ENCODE measurements at regions of chr19 and their contacts with region 1.

Region 1: DNA sequence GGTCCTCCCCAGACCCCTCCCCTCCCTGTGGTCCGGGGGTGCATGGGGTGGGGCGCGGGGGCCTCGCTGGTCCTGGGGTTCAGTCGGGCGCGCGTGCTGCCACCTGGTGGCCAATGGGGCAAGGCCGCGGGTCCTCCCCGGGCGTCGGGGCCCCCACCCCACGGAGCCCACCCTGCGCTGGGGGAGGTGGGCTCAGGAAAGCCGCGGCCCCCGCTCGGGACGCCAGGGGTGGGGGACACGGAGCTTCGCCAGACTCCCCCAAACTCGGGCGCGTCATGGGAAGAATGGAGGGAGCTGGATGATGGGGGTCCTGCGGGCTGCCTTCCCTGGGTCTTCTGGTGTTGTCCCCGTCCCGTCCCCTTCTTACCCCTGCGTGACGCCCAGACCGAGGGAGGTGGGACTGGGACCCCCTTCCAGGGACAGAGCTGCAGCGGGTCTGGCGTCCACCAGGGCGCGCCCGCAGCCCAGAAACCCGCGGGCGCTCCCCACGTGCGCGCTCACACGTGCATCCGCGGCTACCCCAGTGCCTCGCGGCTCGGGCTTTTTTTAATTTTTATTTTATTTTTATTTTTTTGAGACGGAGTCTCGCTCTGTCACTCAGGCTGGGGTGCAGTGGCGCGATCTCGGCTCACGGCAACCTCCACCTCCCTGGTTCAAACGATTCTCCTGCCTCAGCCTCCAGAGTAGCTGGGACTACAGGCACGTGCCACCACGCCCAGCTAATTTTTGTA is 19.8 kb upstream of the TCF3 start:
- DNase-seq: peak; percentile 75
- ATAC-seq: peak; percentile 38
- H3K4me3 Mint-ChIP-seq: peak overlapping the region; percentile 71
- H3K27ac Mint-ChIP-seq: peak overlapping the region; percentile 53
- H3K4me1 Mint-ChIP-seq: peaks cover 33% of the 10 kb centered on the region
- H3K27me3 Mint-ChIP-seq: peaks cover 24% of the 10 kb centered on the region
- CTCF ChIP-seq: no peak

Region 2: GRCh38 chr19:377801-378581 is 1294.2 kb before region 1 on chr19:
- CTCF ChIA-PET with region 1: no interaction called
- POLR2A ChIA-PET with region 1: no interaction called
- intact Hi-C with region 1: no loop called
- DNase-seq: no peak
- ATAC-seq: no peak
- H3K4me3 Mint-ChIP-seq: no peak overlapping the region
- H3K27ac Mint-ChIP-seq: no peak overlapping the region
- H3K4me1 Mint-ChIP-seq: peaks cover 7% of the 10 kb centered on the region
- H3K27me3 Mint-ChIP-seq: peaks cover 7% of the 10 kb centered on the region
- CTCF ChIP-seq: no peak

Region 3: GRCh38 chr19:1364070-1364704 is 308.0 kb before region 1 on chr19:
- CTCF ChIA-PET with region 1: no interaction called
- POLR2A ChIA-PET with region 1: no interaction called
- intact Hi-C with region 1: no loop called
- DNase-seq: no peak
- ATAC-seq: peak; percentile 27
- H3K4me3 Mint-ChIP-seq: peak overlapping the region; percentile 44
- H3K27ac Mint-ChIP-seq: no peak overlapping the region
- H3K4me1 Mint-ChIP-seq: peaks cover 36% of the 10 kb centered on the region
- H3K27me3 Mint-ChIP-seq: no peaks in the 10 kb centered on the region
- CTCF ChIP-seq: no peak

Region 4: GRCh38 chr19:1592755-1593500 is 79.3 kb before region 1 on chr19 and contains the start of gene MBD3:
- CTCF ChIA-PET with region 1: interaction called, 8 read pairs
- POLR2A ChIA-PET with region 1: interaction called, 5 read pairs
- intact Hi-C with region 1: loop called (anchors 2 kb)
- DNase-seq: peak; percentile 89
- ATAC-seq: peak; percentile 84
- H3K4me3 Mint-ChIP-seq: peak within 1 kb of the TSS; percentile 90
- H3K27ac Mint-ChIP-seq: peak within 1 kb of the TSS; percentile 89
- H3K4me1 Mint-ChIP-seq: peaks cover 33% of the 10 kb centered on the region
- H3K27me3 Mint-ChIP-seq: no peaks in the 10 kb centered on the region
- CTCF ChIP-seq: no peak
- total RNA-seq, gene MBD3: 91.9 and 96.9 TPM in 2 replicates

Region 5: GRCh38 chr19:1618157-1619093 is 53.8 kb before region 1 on chr19:
- CTCF ChIA-PET with region 1: interaction called, 19 read pairs
- POLR2A ChIA-PET with region 1: interaction called, 3 read pairs
- intact Hi-C with region 1: loop called (anchors 1 kb)
- DNase-seq: no peak
- ATAC-seq: peak; percentile 72
- H3K4me3 Mint-ChIP-seq: no peak overlapping the region
- H3K27ac Mint-ChIP-seq: peak overlapping the region; percentile 70
- H3K4me1 Mint-ChIP-seq: peaks cover 33% of the 10 kb centered on the region
- H3K27me3 Mint-ChIP-seq: no peaks in the 10 kb centered on the region
- CTCF ChIP-seq: no peak

Region 6: DNA sequence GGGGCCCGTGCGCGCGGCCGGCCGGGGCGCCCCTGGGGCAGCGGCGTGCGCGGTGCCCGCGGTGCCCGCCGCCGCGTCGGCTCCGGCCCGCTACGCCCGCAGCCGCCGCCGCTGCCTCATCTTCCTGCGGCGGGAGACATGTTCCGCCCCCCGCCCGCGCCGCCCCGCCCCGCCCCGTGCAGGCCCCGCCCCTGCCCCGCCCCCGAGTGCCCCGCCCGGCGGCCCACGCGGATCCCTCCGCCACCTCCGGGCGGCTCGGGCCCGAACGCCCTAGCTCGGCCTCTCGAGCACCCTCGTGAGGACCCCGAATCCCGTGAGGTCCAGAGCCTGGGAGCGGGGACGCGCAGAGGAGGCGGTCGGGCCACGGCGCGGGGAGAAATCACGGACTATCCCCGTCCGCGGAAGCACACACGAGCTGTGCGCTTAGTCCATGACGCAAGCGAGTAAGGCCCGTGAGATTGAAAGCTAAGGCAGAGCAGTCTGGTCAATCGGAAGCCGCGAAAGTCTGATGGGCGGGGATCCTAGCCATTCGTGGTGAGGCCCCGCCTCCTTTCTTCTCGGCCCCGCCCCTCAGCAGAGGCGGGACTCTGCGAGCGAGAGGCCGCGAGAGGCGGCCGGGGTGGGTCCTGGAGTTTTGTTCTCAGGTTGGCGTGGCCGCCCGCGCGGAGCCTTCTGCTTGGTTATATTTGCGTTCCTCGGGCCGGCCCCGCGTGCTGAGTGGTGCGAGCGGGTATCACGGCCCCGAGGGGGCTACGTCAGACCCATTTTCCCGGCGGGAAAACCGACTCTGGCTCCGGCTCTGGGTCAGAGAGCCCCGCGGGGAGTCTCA is 19.5 kb before region 1 on chr19 and contains the start of gene TCF3:
- CTCF ChIA-PET with region 1: interaction called, 29 read pairs
- POLR2A ChIA-PET with region 1: interaction called, 121 read pairs
- intact Hi-C with region 1: loop called (anchors 1 kb)
- DNase-seq: peak; percentile 99
- ATAC-seq: peak; percentile 82
- H3K4me3 Mint-ChIP-seq: peak within 1 kb of the TSS; percentile 91
- H3K27ac Mint-ChIP-seq: peak within 1 kb of the TSS; percentile 95
- H3K4me1 Mint-ChIP-seq: peaks cover 68% of the 10 kb centered on the region
- H3K27me3 Mint-ChIP-seq: no peaks in the 10 kb centered on the region
- CTCF ChIP-seq: no peak
- total RNA-seq, gene TCF3: 139 and 143 TPM in 2 replicates

Region 7: DNA sequence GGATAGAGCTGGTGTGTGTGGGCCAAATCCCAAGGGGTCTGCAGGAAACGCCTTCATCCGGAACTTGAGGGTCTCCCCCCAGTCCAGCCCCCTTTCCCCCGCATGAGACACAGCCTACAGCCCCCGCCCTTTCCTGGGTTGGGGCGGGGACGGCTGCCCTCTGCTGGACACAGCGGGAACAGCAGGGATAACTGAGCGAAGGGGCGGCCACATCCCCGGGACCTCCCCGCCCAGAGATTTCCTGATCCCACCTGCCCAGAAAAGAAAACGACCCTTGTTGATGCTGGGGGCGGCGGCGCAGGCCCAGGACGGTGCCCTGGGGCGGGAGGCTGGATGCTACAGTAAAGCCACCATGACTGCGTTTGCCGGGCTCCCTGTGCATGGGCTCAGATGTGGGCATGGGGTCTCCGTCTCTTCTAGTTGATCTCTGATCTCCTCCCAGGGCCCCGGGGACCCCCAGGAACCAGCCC is 95.3 kb after region 1 on chr19:
- CTCF ChIA-PET with region 1: interaction called, 13 read pairs
- POLR2A ChIA-PET with region 1: no interaction called
- intact Hi-C with region 1: loop called (anchors 1 kb)
- DNase-seq: peak; percentile 74
- ATAC-seq: peak; percentile 84
- H3K4me3 Mint-ChIP-seq: no peak overlapping the region
- H3K27ac Mint-ChIP-seq: no peak overlapping the region
- H3K4me1 Mint-ChIP-seq: peaks cover 4% of the 10 kb centered on the region
- H3K27me3 Mint-ChIP-seq: peaks cover 57% of the 10 kb centered on the region
- CTCF ChIP-seq: no peak

Region 8: GRCh38 chr19:1812469-1813196 is 140.4 kb after region 1 on chr19:
- CTCF ChIA-PET with region 1: interaction called, 3 read pairs
- POLR2A ChIA-PET with region 1: no interaction called
- intact Hi-C with region 1: loop called (anchors 1 kb)
- DNase-seq: peak; percentile 82
- ATAC-seq: peak; percentile 81
- H3K4me3 Mint-ChIP-seq: peak overlapping the region; percentile 96
- H3K27ac Mint-ChIP-seq: peak overlapping the region; percentile 90
- H3K4me1 Mint-ChIP-seq: peaks cover 14% of the 10 kb centered on the region
- H3K27me3 Mint-ChIP-seq: no peaks in the 10 kb centered on the region
- CTCF ChIP-seq: no peak

Region 9: DNA sequence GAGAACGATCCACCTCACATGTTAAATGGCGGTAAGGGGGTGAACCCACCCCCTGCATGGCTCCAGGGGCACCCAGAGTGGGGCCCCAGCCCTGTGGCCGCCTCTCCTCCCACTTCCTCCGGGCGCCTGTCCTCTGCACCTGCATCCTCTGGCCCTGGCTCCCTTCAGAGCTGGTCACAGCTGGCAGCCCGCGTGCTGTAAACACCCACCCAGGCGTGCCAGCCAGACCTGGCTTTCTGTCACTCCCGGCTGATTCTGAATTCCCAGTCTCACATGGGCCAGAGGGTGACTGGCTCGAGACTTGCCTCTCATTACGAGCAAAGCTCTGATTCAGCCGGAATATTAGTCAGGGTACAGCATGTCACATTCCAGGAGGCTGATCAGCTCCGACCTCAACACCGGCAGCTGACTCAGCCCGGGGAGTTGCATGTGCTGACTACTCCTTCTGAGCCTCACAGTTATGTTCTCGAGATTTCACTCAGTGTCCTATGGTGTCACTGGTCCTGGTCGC is 955.2 kb after region 1 on chr19:
- CTCF ChIA-PET with region 1: no interaction called
- POLR2A ChIA-PET with region 1: no interaction called
- intact Hi-C with region 1: loop called (anchors 10 kb)
- DNase-seq: peak; percentile 68
- ATAC-seq: peak; percentile 62
- H3K4me3 Mint-ChIP-seq: peak overlapping the region; percentile 76
- H3K27ac Mint-ChIP-seq: peak overlapping the region; percentile 94
- H3K4me1 Mint-ChIP-seq: peaks cover 95% of the 10 kb centered on the region
- H3K27me3 Mint-ChIP-seq: no peaks in the 10 kb centered on the region
- CTCF ChIP-seq: no peak

Measured in activated B cell treated with CpG ODN at 0.5 μM for 24 hours (primary cell).